ENCODE measurements at regions of chr14 and their contacts with region 1.

Region 1: GRCh38 chr14:20855652-20856291 is 35.4 kb upstream of the RNASE3 start:
- DNase-seq: peak; percentile 58
- H3K4me3 Mint-ChIP-seq: no peak overlapping the region
- H3K27ac Mint-ChIP-seq: no peak overlapping the region
- H3K4me1 Mint-ChIP-seq: no peaks in the 10 kb centered on the region
- H3K27me3 Mint-ChIP-seq: peaks cover 21% of the 10 kb centered on the region

Region 2: DNA sequence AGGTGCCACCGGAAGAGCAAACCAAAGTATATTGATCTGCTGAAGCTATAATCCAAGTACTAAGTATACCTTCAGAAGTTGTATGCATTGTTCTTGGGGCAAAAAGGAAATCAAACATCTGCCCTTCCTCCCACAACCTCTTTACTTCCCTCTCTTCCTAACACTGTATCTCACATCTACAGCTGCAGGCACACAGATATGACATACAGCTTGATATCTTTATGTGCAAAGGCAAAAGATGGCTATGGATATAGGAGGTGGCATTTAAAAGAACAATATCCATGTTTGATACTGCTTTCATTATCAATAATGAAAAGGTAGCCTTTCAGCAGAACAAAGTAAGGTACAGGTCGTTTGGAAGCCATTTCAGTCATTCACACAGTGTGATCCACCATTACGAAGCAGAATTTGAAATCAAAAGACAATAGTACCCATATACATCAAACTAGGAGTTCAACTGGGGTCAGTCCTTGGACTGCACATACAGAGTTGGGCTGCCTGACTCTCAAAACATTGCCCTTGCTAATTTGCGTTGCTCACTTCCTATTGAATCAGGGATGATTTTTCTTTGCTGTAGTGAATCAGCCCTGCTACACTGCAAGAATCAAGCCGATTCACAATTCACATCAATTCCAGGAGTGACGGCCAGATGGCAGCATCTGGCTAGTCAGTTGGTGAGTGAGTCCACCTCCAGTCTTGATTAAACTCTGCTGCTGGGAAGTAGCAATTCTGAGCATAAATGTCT is 158.3 kb before region 1 on chr14:
- CTCF ChIA-PET with region 1: interaction called, 25 read pairs
- POLR2A ChIA-PET with region 1: no interaction called
- intact Hi-C with region 1: loop called (anchors 1 kb)
- DNase-seq: peak; percentile 80
- H3K4me3 Mint-ChIP-seq: no peak overlapping the region
- H3K27ac Mint-ChIP-seq: no peak overlapping the region
- H3K4me1 Mint-ChIP-seq: peaks cover 5% of the 10 kb centered on the region
- H3K27me3 Mint-ChIP-seq: no peaks in the 10 kb centered on the region

Region 3: DNA sequence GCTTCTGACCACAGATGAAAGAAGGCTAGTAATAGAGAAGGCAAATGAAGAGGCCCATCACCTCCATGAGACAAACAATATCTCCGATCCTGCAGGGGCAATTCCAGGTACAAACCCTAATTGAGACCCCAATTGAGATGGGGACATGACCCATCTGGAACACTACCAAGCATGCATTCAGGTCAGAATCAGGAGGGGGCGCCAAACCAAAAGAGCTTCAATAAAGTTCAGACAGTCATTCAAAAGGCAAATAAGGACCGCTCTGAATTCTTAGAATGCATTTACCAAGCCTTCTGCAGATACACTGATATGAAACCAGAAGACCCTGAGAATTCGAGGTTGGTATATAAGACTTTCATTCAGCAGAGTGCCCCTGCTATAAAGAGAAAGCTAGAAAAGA is 97.8 kb before region 1 on chr14:
- CTCF ChIA-PET with region 1: interaction called, 19 read pairs
- POLR2A ChIA-PET with region 1: no interaction called
- intact Hi-C with region 1: loop called (anchors 1 kb)
- DNase-seq: peak; percentile 51
- H3K4me3 Mint-ChIP-seq: no peak overlapping the region
- H3K27ac Mint-ChIP-seq: no peak overlapping the region
- H3K4me1 Mint-ChIP-seq: no peaks in the 10 kb centered on the region
- H3K27me3 Mint-ChIP-seq: peaks cover 2% of the 10 kb centered on the region

Region 4: GRCh38 chr14:20866963-20867362 is 11.2 kb after region 1 on chr14:
- CTCF ChIA-PET with region 1: interaction called, 62 read pairs
- POLR2A ChIA-PET with region 1: no interaction called
- intact Hi-C with region 1: no loop called
- DNase-seq: no peak
- H3K4me3 Mint-ChIP-seq: no peak overlapping the region
- H3K27ac Mint-ChIP-seq: no peak overlapping the region
- H3K4me1 Mint-ChIP-seq: no peaks in the 10 kb centered on the region
- H3K27me3 Mint-ChIP-seq: peaks cover 12% of the 10 kb centered on the region

Region 5: DNA sequence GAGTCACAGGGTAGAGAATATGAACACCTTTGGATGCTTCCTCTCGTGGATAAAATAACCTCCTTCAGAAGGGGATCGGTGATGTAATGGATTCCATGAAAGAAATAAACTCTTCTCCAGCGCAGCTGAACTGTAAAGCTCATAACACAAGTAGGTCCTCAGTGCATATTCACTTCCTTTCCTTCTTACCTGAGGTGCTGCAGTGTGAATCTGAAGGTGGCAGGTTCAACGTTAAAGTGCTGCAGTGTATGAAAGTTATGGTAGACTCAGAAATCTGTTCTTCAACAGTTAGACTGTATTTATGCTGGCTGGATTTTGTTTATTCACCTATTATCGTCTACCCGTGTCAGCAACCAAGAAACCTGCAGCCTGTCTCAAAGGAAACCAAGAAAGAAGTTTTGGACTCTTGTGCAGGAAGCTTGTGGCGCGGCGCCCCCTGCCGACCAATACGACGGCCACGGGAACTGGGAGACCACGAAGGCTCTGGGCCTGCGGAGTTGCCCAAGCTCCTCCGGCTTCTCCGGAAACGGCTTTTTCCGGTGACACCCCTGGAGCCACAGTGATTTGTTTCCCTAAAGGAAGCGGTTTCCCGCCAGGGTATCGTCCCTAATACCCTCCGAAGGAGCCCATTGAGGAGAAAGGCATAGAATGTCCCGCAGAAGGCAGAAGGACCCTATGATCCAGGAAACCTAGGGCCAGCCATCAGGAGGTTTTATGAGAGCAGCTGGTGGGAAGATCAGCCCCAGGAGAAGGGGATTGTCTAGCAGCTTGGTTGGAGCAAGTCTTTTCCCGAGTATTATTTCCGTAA is 17.8 kb after region 1 on chr14:
- CTCF ChIA-PET with region 1: interaction called, 62 read pairs
- POLR2A ChIA-PET with region 1: no interaction called
- intact Hi-C with region 1: loop called (anchors 1 kb)
- DNase-seq: peak; percentile 91
- H3K4me3 Mint-ChIP-seq: peak overlapping the region; percentile 13
- H3K27ac Mint-ChIP-seq: no peak overlapping the region
- H3K4me1 Mint-ChIP-seq: peaks cover 15% of the 10 kb centered on the region
- H3K27me3 Mint-ChIP-seq: no peaks in the 10 kb centered on the region

Measured in activated CD4-positive, alpha-beta memory T cell treated with anti-CD3 and anti-CD28 coated beads for 36 hours (primary cell).